Activated T-helper 2 cell treated with anti-CD3 and anti-CD28 coated beads, Interferon-gamma antibody, Interleukin-2, Interleukin-4, amounts not matched to agents 10 μg/mL and 5 μg/mL and 100 μg/mL, durations not matched to agents 14 hours and 24 hours and 36 hours (primary cell): ENCODE measurements at regions of chr6 and their contacts with region 1.

Region 1: GRCh38 chr6:16163535-16164300 is 34.8 kb downstream of the MYLIP start:
- DNase-seq: no peak
- H3K4me3 Mint-ChIP-seq: no peak overlapping the region
- H3K27ac Mint-ChIP-seq: peak overlapping the region; percentile 29
- H3K4me1 Mint-ChIP-seq: peaks cover 48% of the 10 kb centered on the region
- H3K27me3 Mint-ChIP-seq: no peaks in the 10 kb centered on the region

Region 2: DNA sequence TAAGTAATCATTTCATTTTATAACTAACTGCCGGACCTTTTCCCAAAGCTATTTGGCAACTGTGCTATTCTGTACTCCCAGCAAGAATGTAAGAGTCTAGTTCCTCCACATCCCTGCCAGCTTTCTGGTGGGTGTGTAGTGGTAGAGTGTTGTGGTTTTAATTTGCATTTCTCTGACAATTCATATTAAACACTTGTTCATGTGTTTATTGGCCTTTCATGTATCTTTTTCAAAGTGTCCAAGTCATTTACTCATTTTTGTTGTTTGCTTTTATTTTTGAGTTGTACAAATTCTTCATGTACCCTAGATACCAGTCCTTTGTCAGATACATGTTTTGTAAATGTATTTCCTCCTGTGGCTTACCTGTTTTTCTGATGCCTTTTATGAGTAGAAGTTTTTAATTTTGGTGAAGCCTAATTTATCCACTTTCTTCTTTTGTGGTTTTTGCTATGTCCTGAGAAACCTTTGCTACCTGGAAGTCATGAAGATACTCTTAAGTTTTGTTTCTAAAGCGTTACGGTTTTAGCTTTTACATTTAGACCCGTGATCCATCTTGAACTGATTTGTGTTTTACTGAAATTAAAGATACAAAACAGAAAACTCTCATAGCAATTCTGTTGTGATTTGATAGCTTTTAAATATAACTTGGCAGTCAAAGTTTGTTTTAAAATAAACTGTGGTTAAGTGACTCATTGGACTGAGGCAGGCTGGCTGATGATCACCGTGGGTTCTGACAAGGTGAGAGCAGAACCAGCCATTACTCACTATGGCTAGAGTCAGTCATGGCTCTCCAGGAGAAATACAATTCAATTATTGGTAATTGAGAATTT is 26.9 kb before region 1 on chr6:
- intact Hi-C with region 1: loop called (anchors 2 kb)
- DNase-seq: peak; percentile 29
- H3K4me3 Mint-ChIP-seq: peak overlapping the region; percentile 77
- H3K27ac Mint-ChIP-seq: peak overlapping the region; percentile 94
- H3K4me1 Mint-ChIP-seq: peaks cover 68% of the 10 kb centered on the region
- H3K27me3 Mint-ChIP-seq: no peaks in the 10 kb centered on the region